ENCODE measurements at regions of chr12 and their contacts with region 1.

Region 1: GRCh38 chr12:77496714-77497113 is 334.0 kb upstream of the NAV3 start:
- DNase-seq: no peak
- H3K4me3 ChIP-seq: no peak overlapping the region
- H3K27ac ChIP-seq: no peak overlapping the region
- H3K4me1 ChIP-seq: no peaks in the 10 kb centered on the region
- H3K27me3 ChIP-seq: no peaks in the 10 kb centered on the region
- CTCF ChIP-seq: no peak

Region 2: GRCh38 chr12:77537648-77538047 is 40.9 kb after region 1 on chr12:
- CTCF ChIA-PET with region 1: no interaction called
- dilution Hi-C with region 1: loop called (anchors 5 kb)
- in situ Hi-C with region 1: no loop called
- intact Hi-C with region 1: no loop called
- DNase-seq: no peak
- H3K4me3 ChIP-seq: no peak overlapping the region
- H3K27ac ChIP-seq: no peak overlapping the region
- H3K4me1 ChIP-seq: no peaks in the 10 kb centered on the region
- H3K27me3 ChIP-seq: no peaks in the 10 kb centered on the region
- CTCF ChIP-seq: no peak

Measured in mammary epithelial cell (primary cell).